Motor neuron (in vitro differentiated cells): ENCODE measurements at regions of chr18 and their contacts with region 1.

Region 1: DNA sequence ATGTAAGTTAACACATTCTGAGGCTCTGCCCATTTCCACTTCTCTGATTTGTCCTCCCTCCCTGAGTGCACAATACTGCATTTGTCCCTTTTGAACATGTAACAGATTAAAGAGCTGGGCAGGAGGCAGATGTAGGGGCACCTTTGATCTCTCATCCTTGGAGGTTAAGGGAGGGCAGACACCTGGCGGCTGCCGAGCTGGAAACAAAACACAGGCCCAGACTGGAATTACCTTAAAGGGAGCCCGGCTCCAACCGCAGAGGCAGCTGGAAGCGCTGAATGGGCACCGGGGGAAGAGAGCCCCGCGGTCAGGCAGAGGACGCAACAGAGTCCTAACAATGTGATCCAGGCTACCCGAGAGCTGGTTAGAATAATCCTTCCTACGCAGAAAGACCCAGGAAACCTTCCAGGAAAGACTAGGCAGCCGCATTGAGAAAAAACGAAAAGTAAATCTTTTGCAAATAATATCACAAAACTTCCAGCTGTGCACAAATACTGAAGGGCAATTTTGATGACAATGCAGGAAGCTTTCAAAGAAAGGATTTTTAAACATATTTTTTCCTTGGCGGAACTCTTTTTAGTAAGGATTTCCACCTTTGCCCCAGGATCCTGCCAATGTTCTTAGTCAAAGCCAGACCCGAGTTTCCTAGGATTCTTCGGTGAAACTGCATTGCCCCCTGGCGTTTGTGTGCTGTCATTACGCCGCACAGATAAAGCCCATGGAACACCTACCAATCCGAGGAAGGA is 216.0 kb downstream of the TGIF1 start:
- ATAC-seq: peak; percentile 82 to 97 (median 91)
- H3K4me3 ChIP-seq: no peak overlapping the region
- H3K27ac ChIP-seq: peak overlapping the region; percentile 18 to 76
- H3K4me1 ChIP-seq: peaks cover 16 to 17% of the 10 kb centered on the region in 2 donors

Region 2: GRCh38 chr18:2932247-2933181 is 733.4 kb before region 1 on chr18:
- in situ Hi-C with region 1: loop called in 1 of 9 experiments (anchors 25 kb)
- ATAC-seq: peak in 6 of 8 experiments; percentile 18 to 65 (median 46)
- H3K4me3 ChIP-seq: no peak overlapping the region
- H3K27ac ChIP-seq: no peak overlapping the region
- H3K4me1 ChIP-seq: no peaks in the 10 kb centered on the region

Region 3: GRCh38 chr18:3281456-3282400 is 384.2 kb before region 1 on chr18:
- in situ Hi-C with region 1: loop called (anchors 5 to 25 kb)
- ATAC-seq: peak; percentile 72 to 87 (median 79)
- H3K4me3 ChIP-seq: no peak overlapping the region
- H3K27ac ChIP-seq: no peak overlapping the region
- H3K4me1 ChIP-seq: peaks cover 5 to 6% of the 10 kb centered on the region in 2 donors

Region 4: DNA sequence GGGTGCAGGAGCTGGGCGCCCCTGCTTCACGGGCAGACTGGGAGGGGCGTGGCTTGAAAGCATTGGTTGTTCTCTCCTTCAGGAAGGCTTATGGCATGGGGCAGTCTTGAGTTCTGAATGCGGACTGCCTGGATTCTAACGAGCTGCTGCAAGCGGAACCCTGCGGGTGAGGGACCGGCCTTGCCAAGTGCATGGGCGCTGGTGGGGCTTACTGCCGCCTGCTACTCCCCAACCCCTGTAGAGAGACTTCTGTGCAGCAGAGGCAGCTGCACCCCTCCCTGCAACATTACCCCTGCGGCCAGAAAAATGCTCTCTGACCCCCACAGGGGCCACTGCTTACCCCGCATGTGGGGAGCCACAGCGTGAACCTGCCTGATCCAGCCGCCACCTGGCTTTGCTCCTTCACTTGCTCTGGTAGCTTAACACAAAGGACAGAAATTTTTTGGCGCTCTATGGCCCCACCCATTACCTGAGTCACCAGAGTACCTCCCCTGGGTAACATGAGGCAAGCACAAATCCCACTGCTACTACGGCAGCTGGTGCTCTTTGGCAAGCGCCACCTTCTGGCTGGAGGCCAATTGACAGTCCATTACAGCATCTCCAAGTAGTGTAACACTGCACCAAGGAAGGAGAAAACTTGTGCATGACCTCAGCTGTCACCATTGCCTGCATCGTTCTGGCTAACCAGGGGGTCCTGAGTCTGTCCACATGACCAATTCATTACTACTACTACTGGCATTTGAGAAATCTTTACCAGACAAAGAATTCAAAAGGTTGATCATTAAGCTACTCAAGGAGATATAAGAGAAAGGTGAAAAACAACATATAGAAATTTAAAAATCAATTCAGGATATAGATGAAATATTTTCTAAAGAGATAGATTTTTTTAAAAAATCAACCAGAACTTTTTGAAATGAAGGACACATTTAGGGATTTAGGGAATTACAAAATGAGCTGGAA is 368.6 kb before region 1 on chr18:
- in situ Hi-C with region 1: loop called in 3 of 9 experiments (anchors 25 kb)
- ATAC-seq: peak in 6 of 8 experiments; percentile 89 to 99 (median 94)
- H3K4me3 ChIP-seq: peak overlapping the region; percentile 1 to 43 (median 26)
- H3K27ac ChIP-seq: no peak overlapping the region
- H3K4me1 ChIP-seq: no peaks in the 10 kb centered on the region

Region 5: DNA sequence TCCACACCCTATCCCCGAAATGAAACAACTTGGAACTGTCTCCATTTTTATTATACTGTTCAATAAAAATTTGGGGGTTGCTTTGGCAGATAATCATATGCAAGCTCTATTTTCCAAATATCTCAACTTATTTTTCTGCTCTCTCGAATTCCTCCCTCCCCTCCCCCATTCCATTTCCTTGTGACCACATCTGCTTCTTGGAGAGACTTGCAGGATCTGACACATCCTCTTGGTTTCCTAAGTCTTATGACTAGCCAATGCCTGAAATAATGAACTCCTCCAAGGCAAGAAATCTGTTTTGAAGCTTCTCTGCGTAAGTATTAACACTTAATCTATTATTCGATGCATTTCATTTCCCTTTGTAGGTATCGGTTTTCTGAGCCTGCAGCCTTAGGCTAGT is 199.9 kb before region 1 on chr18:
- in situ Hi-C with region 1: loop called in 1 of 9 experiments (anchors 10 kb)
- ATAC-seq: peak in 3 of 8 experiments; percentile 9 to 73 (median 72)
- H3K4me3 ChIP-seq: no peak overlapping the region
- H3K27ac ChIP-seq: no peak overlapping the region
- H3K4me1 ChIP-seq: peaks cover 0 to 3% of the 10 kb centered on the region in 2 donors

Region 6: DNA sequence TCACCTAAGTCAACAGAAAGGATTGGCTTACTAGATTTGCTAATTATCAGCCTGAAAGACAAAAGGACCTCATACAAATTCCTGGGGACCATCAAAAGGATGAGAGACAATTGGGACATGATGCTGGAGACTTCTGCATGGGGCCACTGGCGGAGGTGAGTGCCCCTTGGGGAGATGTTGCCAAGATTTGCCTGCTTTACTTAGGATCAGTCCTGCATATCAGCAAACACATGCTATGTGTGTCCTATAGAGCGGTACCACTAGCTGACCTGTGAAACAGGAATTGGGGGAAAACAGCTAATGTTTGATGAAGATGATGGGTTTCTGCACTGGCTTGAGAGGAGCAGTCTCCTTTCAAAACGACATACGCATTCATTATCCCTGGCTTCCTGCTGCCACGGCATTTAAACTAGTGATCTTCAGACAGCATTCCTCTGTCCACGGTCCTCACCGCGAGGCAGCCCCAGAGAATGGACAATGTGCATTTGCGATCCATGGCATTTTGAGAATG is 111.8 kb before region 1 on chr18:
- in situ Hi-C with region 1: no loop called
- ATAC-seq: peak in 2 of 8 experiments; percentile 32 to 72
- H3K4me3 ChIP-seq: no peak overlapping the region
- H3K27ac ChIP-seq: no peak overlapping the region
- H3K4me1 ChIP-seq: peaks cover 0 to 3% of the 10 kb centered on the region in 2 donors

Region 7: DNA sequence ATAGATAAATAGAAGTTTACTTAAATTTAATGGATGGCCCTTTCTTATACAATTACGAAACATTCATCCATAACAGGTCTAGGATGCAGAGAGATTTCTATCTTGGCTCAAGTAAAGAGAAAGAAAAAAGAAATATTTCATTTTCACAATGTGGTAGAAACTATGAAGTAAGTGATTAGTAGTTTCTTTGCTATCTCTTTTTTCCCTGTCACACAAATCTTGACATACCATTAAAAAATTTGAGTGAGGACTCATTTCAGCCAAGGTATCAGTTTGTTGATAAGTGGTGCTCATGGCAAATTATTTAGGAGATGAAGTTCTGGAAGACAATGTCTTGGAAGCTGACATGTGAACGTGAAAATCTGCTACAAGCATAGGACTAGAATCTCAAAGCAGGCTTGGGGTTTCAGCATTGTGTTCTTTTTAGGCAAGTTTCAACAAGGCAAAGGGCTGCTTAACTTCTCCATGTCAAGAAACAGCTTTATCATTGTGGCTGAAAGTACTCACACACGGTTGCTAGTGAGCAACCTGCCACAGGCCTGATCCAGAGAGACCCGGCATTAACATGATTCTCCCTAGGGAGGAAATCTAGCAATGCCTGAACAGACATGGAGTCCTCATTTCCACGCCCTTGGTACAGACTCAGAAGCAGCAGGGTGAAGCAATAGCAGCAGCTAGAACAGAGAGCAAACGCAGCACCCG is 374.6 kb after region 1 on chr18:
- in situ Hi-C with region 1: no loop called
- ATAC-seq: peak in 7 of 8 experiments; percentile 57 to 88 (median 74)
- H3K4me3 ChIP-seq: no peak overlapping the region
- H3K27ac ChIP-seq: no peak overlapping the region
- H3K4me1 ChIP-seq: peaks cover 0 to 7% of the 10 kb centered on the region in 2 donors